SK-MEL-5 (cell line): ENCODE measurements at regions of chr2 and their contacts with region 1.

Region 1: DNA sequence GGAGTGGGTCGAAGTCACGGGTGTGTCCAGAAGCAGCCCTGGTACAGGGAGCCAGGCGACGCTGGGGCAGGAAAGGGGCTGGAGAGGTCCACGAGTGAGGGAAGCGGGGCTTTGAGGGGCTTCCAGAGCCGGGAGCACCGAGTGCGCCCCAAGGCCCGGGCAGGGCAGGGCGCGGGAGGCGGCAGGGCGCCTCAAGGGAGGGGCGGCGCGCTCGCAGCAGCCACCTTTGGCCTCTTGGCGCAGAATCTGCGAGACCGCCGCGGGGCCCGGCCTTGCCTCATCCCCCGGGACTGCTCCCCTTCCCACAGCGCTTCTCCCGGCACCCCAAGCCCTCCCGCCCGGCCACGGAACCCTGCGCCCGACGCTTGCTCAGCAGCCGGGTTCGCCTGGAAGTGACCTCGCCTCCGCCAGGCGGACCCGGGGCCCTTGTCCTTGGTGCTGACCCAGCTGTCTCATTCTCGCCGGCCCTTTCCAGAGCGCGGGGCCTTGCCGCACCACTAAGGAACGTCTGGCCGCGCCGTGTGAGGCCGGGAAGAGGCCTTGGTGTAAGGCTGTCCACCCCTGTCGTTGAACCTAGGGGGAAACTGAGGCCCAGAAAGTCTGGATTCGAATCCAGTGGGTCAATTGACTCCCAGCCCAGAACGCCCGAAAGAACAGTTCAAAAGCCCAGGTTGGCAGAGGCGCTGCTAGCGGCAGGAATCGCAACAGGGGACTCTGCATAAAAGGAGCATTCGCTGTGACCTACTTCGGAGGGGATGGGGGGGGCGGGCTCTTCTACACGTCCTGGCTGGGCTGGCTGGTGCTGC is 584 bp upstream of the DNER start:
- DNase-seq: peak; percentile 54

Region 2: GRCh38 chr2:229610333-229610732 is 104.6 kb before region 1 on chr2:
- in situ Hi-C with region 1: loop called (anchors 25 kb)
- DNase-seq: peak; percentile 76

Region 3: GRCh38 chr2:230053753-230054478 is 339.0 kb after region 1 on chr2:
- in situ Hi-C with region 1: no loop called
- DNase-seq: no peak